Endothelial cell of umbilical vein (primary cell): ENCODE measurements at regions of chr6 and their contacts with region 1.

Region 1: GRCh38 chr6:17831135-17831534 is 124.4 kb upstream of the NUP153 start:
- DNase-seq: peak; percentile 98
- H3K4me3 ChIP-seq: no peak overlapping the region
- H3K27ac ChIP-seq: peak overlapping the region; percentile 96
- H3K4me1 ChIP-seq: peaks cover 23% of the 10 kb centered on the region
- H3K27me3 ChIP-seq: no peaks in the 10 kb centered on the region
- CTCF ChIP-seq: peak in 1 of 2 donors; percentile 7
- POLR2A ChIP-seq: peak; percentile 49

Region 2: DNA sequence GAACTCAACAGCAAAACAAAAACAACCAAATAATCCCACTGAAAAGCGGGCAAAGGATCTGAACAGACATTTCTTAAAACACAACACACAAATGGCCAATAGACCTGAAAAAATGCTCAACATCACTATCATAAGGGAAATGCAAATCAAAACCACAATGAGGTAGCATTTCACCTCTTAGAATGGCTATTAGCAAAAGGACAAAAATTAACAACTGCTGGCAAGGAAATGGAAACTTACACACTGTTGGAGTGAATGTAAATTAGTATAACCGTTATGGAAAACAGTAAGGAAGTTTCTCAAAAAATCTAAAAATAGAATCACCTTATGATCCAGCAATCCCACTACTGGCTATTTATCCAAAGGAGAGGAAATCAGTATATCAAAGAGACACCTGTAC is 210.1 kb before region 1 on chr6:
- CTCF ChIA-PET with region 1: no interaction called
- POLR2A ChIA-PET with region 1: no interaction called
- dilution Hi-C with region 1: no loop called
- intact Hi-C with region 1: no loop called
- DNase-seq: no peak
- H3K4me3 ChIP-seq: no peak overlapping the region
- H3K27ac ChIP-seq: no peak overlapping the region
- H3K4me1 ChIP-seq: no peaks in the 10 kb centered on the region
- H3K27me3 ChIP-seq: no peaks in the 10 kb centered on the region
- CTCF ChIP-seq: no peak
- POLR2A ChIP-seq: no peak

Region 3: DNA sequence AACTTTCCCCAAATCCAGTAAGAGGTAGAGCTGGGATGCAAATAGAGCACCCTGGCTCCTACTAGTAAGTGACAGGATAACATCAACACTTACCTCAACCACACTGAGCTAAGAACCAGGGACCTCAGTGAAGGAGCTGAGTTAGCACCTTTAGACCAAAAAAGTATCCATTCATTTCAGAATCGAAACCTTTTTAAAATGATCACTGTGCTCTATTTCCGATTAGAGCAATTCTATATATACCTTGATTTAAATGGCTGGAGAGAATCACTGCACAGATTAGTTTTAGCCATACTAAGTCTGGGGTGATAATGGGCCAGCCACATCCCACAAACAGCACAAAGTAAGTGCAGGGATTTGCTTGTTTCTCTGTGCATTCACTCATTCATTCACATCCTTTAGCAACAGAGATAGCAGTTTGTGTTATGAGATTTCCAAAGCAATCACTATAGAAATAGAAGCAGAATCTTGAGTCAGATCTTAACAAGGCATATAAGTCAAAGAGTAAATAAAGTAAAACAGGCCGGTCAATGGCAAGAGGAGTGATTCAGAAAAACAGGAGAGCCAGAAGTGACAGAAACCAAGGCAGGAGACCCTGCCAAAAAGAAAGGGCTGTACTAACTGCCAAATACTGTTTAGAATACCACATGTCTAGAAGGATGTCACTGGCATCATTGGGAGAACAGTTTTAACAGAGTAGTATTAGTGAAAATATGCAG is 20.0 kb after region 1 on chr6:
- CTCF ChIA-PET with region 1: interaction called, 4 read pairs
- POLR2A ChIA-PET with region 1: interaction called, 3 read pairs
- dilution Hi-C with region 1: no loop called
- intact Hi-C with region 1: loop called (anchors 1 kb)
- DNase-seq: peak; percentile 65
- H3K4me3 ChIP-seq: peak overlapping the region in 1 of 3 experiments; percentile 51
- H3K27ac ChIP-seq: peak overlapping the region; percentile 93
- H3K4me1 ChIP-seq: peaks cover 49% of the 10 kb centered on the region
- H3K27me3 ChIP-seq: no peaks in the 10 kb centered on the region
- CTCF ChIP-seq: no peak
- POLR2A ChIP-seq: no peak